Panc1 (cell line): ENCODE measurements at regions of chr12 and their contacts with region 1.

Region 1: GRCh38 chr12:12983420-12984035 is 16.5 kb downstream of the HEBP1 start:
- DNase-seq: no peak
- ATAC-seq: peak; percentile 90
- H3K4me3 ChIP-seq: no peak overlapping the region
- H3K27ac ChIP-seq: no peak overlapping the region
- H3K4me1 ChIP-seq: no peaks in the 10 kb centered on the region; the same call in 1 of the 2 replicates
- H3K27me3 ChIP-seq: no peaks in the 10 kb centered on the region
- CTCF ChIP-seq: peak; percentile 72

Region 2: DNA sequence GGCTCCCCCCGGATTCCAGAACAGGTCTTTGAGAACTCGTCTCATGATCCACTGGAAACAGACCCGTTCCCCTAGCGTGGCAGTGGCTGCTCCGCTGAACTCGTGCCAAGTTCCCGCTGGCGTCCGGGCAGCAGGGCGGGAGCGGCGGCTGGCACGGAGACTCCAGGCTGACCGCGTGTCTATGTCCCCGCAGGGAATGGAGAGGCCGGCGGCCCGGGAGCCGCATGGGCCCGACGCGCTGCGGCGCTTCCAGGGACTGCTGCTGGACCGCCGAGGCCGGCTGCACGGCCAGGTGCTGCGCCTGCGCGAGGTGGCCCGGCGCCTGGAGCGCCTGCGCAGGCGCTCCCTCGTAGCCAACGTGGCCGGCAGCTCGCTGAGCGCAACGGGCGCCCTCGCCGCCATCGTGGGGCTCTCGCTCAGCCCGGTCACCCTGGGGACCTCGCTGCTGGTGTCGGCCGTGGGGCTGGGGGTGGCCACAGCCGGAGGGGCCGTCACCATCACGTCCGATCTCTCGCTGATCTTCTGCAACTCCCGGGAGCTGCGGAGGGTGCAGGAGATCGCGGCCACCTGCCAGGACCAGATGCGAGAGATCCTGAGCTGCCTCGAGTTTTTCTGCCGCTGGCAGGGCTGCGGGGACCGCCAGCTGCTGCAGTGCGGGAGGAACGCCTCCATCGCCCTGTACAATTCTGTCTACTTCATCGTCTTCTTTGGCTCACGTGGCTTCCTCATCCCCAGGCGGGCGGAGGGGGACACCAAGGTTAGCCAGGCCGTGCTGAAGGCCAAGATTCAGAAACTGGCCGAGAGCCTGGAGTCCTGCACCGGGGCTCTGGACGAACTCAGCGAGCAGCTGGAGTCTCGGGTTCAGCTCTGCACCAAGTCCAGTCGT is 196.6 kb before region 1 on chr12:
- CTCF ChIA-PET with region 1: no interaction called
- POLR2A ChIA-PET with region 1: no interaction called
- in situ Hi-C with region 1: no loop called
- intact Hi-C with region 1: loop called (anchors 10 kb)
- DNase-seq: no peak
- ATAC-seq: peak; percentile 89
- H3K4me3 ChIP-seq: peak overlapping the region; percentile 45 to 61
- H3K27ac ChIP-seq: peak overlapping the region; percentile 92
- H3K4me1 ChIP-seq: peaks cover 70% of the 10 kb centered on the region
- H3K27me3 ChIP-seq: no peaks in the 10 kb centered on the region
- CTCF ChIP-seq: no peak

Region 3: GRCh38 chr12:12813120-12814101 is 170.1 kb before region 1 on chr12 and contains the start of gene DDX47:
- CTCF ChIA-PET with region 1: no interaction called
- POLR2A ChIA-PET with region 1: no interaction called
- in situ Hi-C with region 1: no loop called
- intact Hi-C with region 1: loop called (anchors 10 kb)
- DNase-seq: no peak
- ATAC-seq: peak; percentile 87
- H3K4me3 ChIP-seq: peak within 1 kb of the TSS; percentile 68 to 99
- H3K27ac ChIP-seq: peak within 1 kb of the TSS; percentile 99
- H3K4me1 ChIP-seq: peaks cover 38% of the 10 kb centered on the region
- H3K27me3 ChIP-seq: no peaks in the 10 kb centered on the region
- CTCF ChIP-seq: peak; percentile 92
- total RNA-seq, gene DDX47: 115 TPM

Region 4: DNA sequence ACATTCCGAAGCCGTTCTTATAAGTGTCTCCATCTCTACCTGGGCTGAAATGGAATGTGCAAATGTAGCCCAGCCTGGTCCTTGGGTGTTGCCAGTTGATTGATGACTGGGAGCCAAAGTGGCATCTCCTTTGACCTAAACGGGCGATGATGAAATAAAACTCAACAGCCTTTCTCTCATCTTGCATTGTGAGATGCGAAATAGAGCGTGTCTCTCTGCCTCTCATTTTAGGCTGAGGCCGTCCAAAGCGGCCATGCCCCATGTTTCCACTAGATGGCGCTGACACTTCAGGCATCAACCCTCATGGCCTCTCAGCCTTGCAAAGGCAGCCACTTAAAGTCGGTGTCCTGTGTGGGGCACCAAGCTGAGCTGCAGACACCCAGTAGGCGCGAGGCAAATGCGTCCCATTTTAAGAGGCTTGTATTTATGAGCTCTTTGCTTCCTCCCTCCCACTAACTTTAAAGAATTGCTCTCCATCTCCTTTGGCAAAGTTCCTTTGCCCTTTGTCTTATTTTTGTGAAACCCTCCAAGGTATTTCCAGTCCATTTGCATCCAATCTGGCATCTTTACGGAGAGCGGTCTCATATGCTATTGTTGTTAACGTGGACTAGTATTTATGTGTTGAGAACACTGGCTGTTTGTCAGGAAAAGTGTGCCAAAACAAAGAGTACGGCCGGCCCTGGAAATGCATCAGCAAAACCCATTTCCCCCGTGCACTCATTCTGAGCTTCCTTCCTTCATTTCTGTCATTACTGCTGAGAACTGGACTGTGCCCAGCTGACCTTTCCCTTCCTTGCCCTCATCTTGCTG is 67.2 kb before region 1 on chr12:
- CTCF ChIA-PET with region 1: no interaction called
- POLR2A ChIA-PET with region 1: no interaction called
- in situ Hi-C with region 1: no loop called
- intact Hi-C with region 1: loop called (anchors 5 kb)
- DNase-seq: no peak
- ATAC-seq: peak; percentile 71
- H3K4me3 ChIP-seq: no peak overlapping the region
- H3K27ac ChIP-seq: peak overlapping the region; percentile 78
- H3K4me1 ChIP-seq: peaks cover 91% of the 10 kb centered on the region
- H3K27me3 ChIP-seq: no peaks in the 10 kb centered on the region
- CTCF ChIP-seq: peak; percentile 87